Heart left ventricle (tissue), 16 donors: ENCODE measurements at regions of chr2 and their contacts with region 1.

Region 1: GRCh38 chr2:112054847-112055729 is at the start of gene TMEM87B:
- DNase-seq: peak; percentile 98 to 100 (median 99)
- ATAC-seq: peak; percentile 80 to 87 (median 86)
- H3K4me3 ChIP-seq: peak within 1 kb of the TSS; percentile 65 to 97 (median 88)
- H3K27ac ChIP-seq: peak within 1 kb of the TSS; percentile 91 to 100 (median 98)
- H3K4me1 ChIP-seq: peaks cover 7 to 41% (median 28%) of the 10 kb centered on the region in 12 donors
- H3K27me3 ChIP-seq: no peaks in the 10 kb centered on the region
- CTCF ChIP-seq: no peak
- POLR2A ChIP-seq: peak in 1 of 2 donors; percentile 72
- total RNA-seq, gene TMEM87B: 4.8 to 18.5 (median 7.9) TPM

Region 2: DNA sequence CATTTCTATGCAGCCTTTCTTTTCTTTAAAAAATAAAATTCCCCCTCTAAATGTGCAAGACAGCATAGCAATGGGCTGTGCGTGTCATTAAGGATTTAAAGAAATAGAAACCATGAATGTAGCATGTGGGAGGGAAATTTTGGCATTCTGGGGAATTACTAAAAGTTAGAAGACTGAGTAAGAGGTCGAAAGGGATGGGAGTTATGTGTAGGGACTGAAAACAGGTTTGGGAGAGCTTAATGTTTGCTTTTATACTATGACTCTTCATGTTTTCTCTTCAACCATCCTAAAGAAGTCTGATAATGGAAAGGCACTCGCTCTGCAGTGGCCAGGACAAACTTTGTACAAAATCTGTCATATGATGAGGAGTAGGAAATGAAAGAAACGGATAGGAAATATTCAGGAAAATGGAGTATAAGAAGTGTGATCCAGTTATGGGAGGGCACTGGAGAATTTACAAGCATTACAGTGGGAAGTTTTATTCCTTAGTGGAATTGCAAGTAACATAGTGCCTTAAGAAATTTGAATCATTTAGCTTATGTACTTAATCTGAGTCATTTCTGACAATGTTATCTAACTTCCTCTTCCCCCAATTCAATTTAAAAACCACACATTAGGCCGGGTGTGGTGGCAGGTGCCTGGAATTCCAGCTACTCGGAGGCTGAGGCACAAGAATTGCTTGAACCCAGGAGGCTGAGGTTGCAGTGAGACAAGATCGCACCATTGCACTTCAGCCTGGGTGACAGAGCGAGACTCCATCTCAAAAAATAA is 20.6 kb after region 1 on chr2:
- intact Hi-C with region 1: loop called in 1 of 10 experiments (anchors 1 kb)
- DNase-seq: peak in 1 of 5 donors; percentile 44
- ATAC-seq: peak in 3 of 4 donors; percentile 36 to 77 (median 57)
- H3K4me3 ChIP-seq: no peak overlapping the region
- H3K27ac ChIP-seq: peak overlapping the region in 10 of 12 donors; percentile 23 to 71 (median 54)
- H3K4me1 ChIP-seq: peaks cover 0 to 21% (median 6%) of the 10 kb centered on the region in 12 donors
- H3K27me3 ChIP-seq: no peaks in the 10 kb centered on the region
- CTCF ChIP-seq: no peak
- POLR2A ChIP-seq: no peak

Region 3: GRCh38 chr2:112275306-112275886 is 220.3 kb after region 1 on chr2 and contains the start of gene ZC3H6:
- intact Hi-C with region 1: loop called in 2 of 10 experiments (anchors 10 kb)
- DNase-seq: peak; percentile 99 to 100 (median 99)
- ATAC-seq: peak; percentile 98 to 100 (median 99)
- H3K4me3 ChIP-seq: peak within 1 kb of the TSS; percentile 79 to 99 (median 86)
- H3K27ac ChIP-seq: peak within 1 kb of the TSS; percentile 96 to 100 (median 100)
- H3K4me1 ChIP-seq: peaks cover 0 to 25% (median 9%) of the 10 kb centered on the region in 12 donors
- H3K27me3 ChIP-seq: no peaks in the 10 kb centered on the region
- CTCF ChIP-seq: peak in 3 of 12 donors; percentile 16 to 36 (median 26)
- POLR2A ChIP-seq: peak in 1 of 2 donors; percentile 93
- total RNA-seq, gene ZC3H6: 11.3 to 30.1 (median 18.0) TPM